Naive thymus-derived CD4-positive, alpha-beta T cell (primary cell): ENCODE measurements at regions of chr15 and their contacts with region 1.

Region 1: DNA sequence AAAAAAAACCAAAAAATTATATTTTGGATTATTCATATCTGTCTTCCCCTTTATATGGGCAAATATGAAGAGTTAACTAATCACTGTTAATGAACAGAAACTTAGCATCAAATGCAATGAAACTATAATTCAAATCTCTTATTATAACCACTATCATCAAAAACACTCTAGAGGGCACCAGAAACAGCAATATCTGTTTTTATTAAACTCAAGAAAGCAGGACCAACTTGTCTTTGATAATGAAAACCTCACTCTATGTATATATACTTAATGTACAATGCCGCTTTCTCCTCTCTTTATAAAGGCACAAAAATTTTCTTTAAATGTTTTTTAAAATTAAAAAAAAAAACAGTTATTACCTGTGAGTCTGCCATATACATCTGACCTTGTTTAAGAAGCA is 92.7 kb downstream of the UACA start:
- DNase-seq: peak in 4 of 9 donors; percentile 13 to 24 (median 20)
- ATAC-seq: no peak
- H3K4me3 ChIP-seq: no peak overlapping the region
- H3K4me3 Mint-ChIP-seq: no peak overlapping the region
- H3K27ac ChIP-seq: no peak overlapping the region
- H3K27ac Mint-ChIP-seq: no peak overlapping the region
- H3K4me1 ChIP-seq: peaks cover 12 to 19% of the 10 kb centered on the region in 2 donors
- H3K4me1 Mint-ChIP-seq: peaks cover 13 to 32% (median 24%) of the 10 kb centered on the region in 7 donors
- H3K27me3 ChIP-seq: no peaks in the 10 kb centered on the region
- H3K27me3 Mint-ChIP-seq: peaks cover 0 to 29% (median 4%) of the 10 kb centered on the region in 5 donors

Region 2: DNA sequence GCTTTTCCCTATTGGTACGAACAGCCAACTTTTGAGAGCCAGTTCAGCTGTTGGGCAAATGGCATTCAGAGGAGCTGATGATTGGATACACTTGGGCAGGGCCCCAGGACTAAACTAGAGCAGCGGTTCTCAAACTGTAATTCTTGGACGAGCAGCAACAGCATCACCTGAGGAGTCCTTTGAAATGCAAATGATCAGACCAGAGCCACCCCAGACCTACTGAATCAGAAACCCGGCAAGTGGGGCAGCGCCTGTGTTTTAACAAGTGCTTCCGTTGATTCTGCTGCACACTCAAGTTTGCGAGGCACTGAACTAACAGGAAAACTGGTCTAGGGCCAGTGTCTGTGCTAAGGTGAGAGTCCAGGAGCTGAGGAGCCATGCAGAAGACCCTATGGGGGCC is 147.1 kb before region 1 on chr15:
- CTCF ChIA-PET with region 1: no interaction called
- POLR2A ChIA-PET with region 1: no interaction called
- intact Hi-C with region 1: no loop called
- DNase-seq: no peak
- ATAC-seq: no peak
- H3K4me3 ChIP-seq: no peak overlapping the region
- H3K4me3 Mint-ChIP-seq: no peak overlapping the region
- H3K27ac ChIP-seq: no peak overlapping the region
- H3K27ac Mint-ChIP-seq: peak overlapping the region in 1 of 9 donors; percentile 28
- H3K4me1 ChIP-seq: peaks cover 19 to 25% of the 10 kb centered on the region in 2 donors
- H3K4me1 Mint-ChIP-seq: peaks cover 23 to 75% (median 61%) of the 10 kb centered on the region in 7 donors
- H3K27me3 ChIP-seq: no peaks in the 10 kb centered on the region
- H3K27me3 Mint-ChIP-seq: peaks cover 0 to 29% (median 0%) of the 10 kb centered on the region in 5 donors

Region 3: GRCh38 chr15:70722266-70723121 is 51.8 kb after region 1 on chr15:
- CTCF ChIA-PET with region 1: interaction called, 19 read pairs
- POLR2A ChIA-PET with region 1: interaction called, 3 read pairs
- intact Hi-C with region 1: loop called in 1 of 2 experiments (anchors 1 kb)
- DNase-seq: peak in 6 of 9 donors; percentile 2 to 42 (median 32)
- ATAC-seq: no peak
- H3K4me3 ChIP-seq: no peak overlapping the region
- H3K4me3 Mint-ChIP-seq: no peak overlapping the region
- H3K27ac ChIP-seq: no peak overlapping the region
- H3K27ac Mint-ChIP-seq: no peak overlapping the region
- H3K4me1 ChIP-seq: no peaks in the 10 kb centered on the region
- H3K4me1 Mint-ChIP-seq: peaks cover 0 to 4% (median 0%) of the 10 kb centered on the region in 7 donors
- H3K27me3 ChIP-seq: peaks cover 0 to 10% of the 10 kb centered on the region in 2 donors
- H3K27me3 Mint-ChIP-seq: peaks cover 0 to 38% (median 12%) of the 10 kb centered on the region in 5 donors

Region 4: DNA sequence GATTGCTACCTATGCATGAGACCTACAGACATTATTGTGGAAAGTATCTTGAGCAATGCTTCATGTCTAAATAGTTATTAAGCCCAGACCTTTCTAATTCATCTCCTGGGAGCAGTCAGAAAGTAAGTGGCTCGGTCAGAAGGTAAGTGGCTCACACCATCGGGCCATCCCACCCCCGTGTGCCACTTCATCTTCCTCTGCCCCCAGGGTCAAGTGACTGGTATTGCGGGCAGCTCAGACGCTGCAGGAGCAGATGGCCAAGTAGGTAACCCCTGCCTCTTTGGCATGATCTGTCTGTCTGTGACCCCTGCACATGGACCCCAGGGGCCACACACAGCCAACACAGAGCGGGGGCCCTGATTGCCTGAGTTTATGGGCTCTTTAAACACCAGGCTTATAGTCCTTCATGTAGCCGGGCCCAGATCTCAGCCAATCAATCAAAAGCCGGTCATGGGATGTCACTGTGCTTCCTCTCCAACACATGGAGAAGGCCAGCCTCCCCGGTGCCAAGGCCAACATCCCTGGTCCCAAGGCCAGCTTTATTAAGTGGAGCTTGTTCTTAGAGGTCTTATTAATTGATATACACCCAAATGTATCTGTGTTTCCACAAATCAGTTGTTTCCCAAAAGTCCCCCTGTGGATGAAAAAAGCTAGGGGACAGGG is 140.4 kb after region 1 on chr15:
- CTCF ChIA-PET with region 1: interaction called, 6 read pairs
- POLR2A ChIA-PET with region 1: no interaction called
- intact Hi-C with region 1: loop called (anchors 1 to 2 kb)
- DNase-seq: no peak
- ATAC-seq: no peak
- H3K4me3 ChIP-seq: no peak overlapping the region
- H3K4me3 Mint-ChIP-seq: no peak overlapping the region
- H3K27ac ChIP-seq: no peak overlapping the region
- H3K27ac Mint-ChIP-seq: no peak overlapping the region
- H3K4me1 ChIP-seq: no peaks in the 10 kb centered on the region
- H3K4me1 Mint-ChIP-seq: peaks cover 0 to 13% (median 9%) of the 10 kb centered on the region in 7 donors
- H3K27me3 ChIP-seq: no peaks in the 10 kb centered on the region
- H3K27me3 Mint-ChIP-seq: peaks cover 0 to 11% (median 6%) of the 10 kb centered on the region in 5 donors